Posterior vena cava (tissue), 2 donors: ENCODE measurements at regions of chr18 and their contacts with region 1.

Region 1: GRCh38 chr18:47095810-47096209 is 54.5 kb downstream of the HDHD2 start:
- DNase-seq: no peak

Region 2: DNA sequence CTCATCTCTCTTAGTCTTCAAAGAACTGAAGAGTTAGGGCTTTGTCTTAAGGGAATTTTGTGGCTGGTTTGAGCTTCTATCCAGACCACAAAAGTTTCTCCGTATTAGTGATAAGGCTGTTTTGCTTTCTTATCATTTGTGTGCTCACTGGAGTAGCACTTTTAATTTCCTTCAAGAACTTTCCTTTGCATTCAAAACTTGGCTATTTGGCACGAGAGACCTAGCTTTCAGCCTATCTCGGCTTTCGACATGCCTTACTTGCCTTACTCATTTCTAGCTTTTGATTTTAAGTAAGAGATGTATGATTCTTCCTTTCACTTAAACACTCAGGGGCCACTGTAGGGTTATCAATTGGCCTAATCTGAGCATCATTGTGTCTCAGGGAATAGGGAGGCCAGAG is 24.6 kb after region 1 on chr18:
- intact Hi-C with region 1: no loop called
- DNase-seq: no peak

Region 3: DNA sequence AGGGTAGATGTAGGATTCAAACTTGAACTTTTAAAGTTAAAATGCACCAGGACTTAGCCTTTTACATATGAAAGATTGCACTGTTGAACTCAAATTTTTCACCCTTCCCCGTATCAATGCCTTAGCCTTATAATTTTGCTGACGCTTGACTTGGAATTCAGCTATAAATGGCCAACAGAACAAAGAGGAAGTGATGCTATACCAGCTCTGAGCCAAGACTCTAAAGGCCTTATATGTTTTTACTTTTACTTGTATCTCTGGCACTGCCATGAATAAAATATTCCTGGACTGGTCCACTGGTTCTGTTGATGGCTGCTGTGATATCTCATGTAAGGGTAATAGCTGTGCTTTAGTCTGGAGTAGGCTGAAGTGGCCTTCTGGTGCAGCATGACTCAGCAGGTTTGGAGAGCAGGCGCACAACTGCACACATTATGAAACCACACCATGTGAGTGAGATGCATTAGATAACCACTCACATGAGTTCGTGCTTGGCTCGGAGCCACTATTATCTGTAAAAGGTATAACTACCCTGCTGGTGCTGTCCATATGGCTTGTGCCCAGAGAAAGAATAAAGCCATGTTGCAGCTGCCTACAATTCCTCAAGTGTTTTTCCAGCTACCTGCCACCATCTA is 88.7 kb after region 1 on chr18:
- intact Hi-C with region 1: no loop called
- DNase-seq: no peak

Region 4: GRCh38 chr18:47204908-47205522 is 109.2 kb after region 1 on chr18:
- intact Hi-C with region 1: loop called (anchors 5 to 10 kb)
- DNase-seq: no peak

Region 5: DNA sequence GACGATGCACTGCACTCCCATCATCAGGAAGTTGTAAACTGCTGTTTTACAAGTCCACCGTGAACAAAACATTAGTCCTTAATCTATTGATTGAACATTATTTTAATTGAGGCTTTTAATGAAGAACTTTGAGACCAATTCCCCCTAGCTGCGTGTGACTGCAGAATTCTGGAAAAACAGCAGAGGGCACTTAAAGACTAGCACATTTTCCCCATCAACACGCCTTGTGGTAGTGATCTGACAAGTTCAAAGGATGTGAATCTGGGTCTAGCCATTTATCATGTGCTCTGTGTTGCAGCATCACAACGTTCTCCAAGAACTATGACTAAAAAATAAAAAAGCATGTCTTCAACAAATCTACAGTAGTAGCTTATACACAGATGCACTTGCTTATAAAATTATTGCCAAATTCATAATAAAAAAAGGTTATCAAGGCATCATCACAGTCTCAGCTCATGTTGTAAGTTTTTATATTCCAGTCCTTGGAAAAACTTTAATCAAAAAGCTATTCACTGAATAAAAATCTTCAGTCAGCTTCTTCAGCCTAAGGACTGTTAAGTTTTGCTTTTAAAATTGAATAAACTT is 119.8 kb after region 1 on chr18:
- intact Hi-C with region 1: loop called in 1 of 2 experiments (anchors 10 kb)
- DNase-seq: no peak